ENCODE measurements at regions of chr7 and their contacts with region 1.

Region 1: GRCh38 chr7:80918909-80919662 is at the start of gene SEMA3C:
- DNase-seq: peak; percentile 92
- H3K4me3 Mint-ChIP-seq: peak within 1 kb of the TSS; percentile 86
- H3K27ac Mint-ChIP-seq: peak within 1 kb of the TSS; percentile 100
- H3K4me1 Mint-ChIP-seq: peaks cover 45% of the 10 kb centered on the region
- H3K27me3 Mint-ChIP-seq: no peaks in the 10 kb centered on the region
- CTCF ChIP-seq: no peak
- total RNA-seq, gene SEMA3C: 61.1 and 67.7 TPM in 2 replicates

Region 2: GRCh38 chr7:80941208-80941758 is 22.2 kb after region 1 on chr7:
- CTCF ChIA-PET with region 1: interaction called, 13 read pairs
- intact Hi-C with region 1: loop called (anchors 1 kb)
- DNase-seq: no peak
- H3K4me3 Mint-ChIP-seq: peak overlapping the region; percentile 25
- H3K27ac Mint-ChIP-seq: peak overlapping the region; percentile 89
- H3K4me1 Mint-ChIP-seq: peaks cover 29% of the 10 kb centered on the region
- H3K27me3 Mint-ChIP-seq: no peaks in the 10 kb centered on the region
- CTCF ChIP-seq: no peak

Region 3: DNA sequence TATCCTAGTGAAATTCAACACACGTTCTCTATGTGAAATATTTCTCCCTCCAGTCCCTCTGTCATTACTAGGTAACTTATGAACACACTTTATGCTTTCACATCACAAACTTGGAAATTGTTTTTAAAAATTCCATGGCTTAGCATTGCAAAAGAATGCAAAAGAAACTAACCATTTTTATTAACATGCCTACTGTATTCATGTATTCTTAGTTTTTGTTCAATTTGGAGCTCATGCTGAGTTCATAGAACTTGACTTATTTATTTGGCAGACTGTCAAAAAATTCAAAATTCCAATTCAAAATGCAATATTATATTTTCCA is 154.8 kb after region 1 on chr7:
- CTCF ChIA-PET with region 1: interaction called, 4 read pairs
- intact Hi-C with region 1: loop called (anchors 1 kb)
- DNase-seq: no peak
- H3K4me3 Mint-ChIP-seq: peak overlapping the region; percentile 51
- H3K27ac Mint-ChIP-seq: peak overlapping the region; percentile 99
- H3K4me1 Mint-ChIP-seq: peaks cover 22% of the 10 kb centered on the region
- H3K27me3 Mint-ChIP-seq: no peaks in the 10 kb centered on the region
- CTCF ChIP-seq: no peak

Region 4: DNA sequence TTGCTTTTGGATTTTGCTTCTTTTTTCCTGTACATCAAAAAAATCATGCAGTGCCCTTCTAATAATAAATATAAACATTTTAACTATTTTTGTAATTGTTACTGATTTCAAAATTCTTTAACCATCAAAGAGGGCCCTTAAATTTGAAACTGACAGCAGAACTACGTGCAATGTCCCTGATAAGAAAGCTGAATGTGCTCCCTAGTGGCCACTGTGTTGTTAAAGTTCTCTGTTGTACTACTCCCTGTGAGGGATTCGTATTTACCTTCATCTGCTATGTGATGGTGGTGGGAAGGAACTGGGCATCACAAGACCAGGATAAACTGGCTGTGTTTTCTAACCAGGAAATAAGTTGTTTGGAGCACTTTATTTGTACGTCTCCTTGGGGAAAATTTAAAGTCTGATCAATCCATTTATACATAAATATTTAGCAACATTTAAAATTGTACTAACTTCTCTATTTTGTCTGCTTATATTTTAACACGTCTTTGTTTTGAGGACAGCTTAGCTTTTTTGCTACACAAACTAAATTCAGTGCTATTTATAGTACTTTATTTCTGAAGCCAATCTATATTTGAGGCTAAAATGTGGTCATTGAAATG is 528.4 kb after region 1 on chr7:
- CTCF ChIA-PET with region 1: no interaction called
- intact Hi-C with region 1: loop called (anchors 1 kb)
- DNase-seq: peak; percentile 21
- H3K4me3 Mint-ChIP-seq: no peak overlapping the region
- H3K27ac Mint-ChIP-seq: no peak overlapping the region
- H3K4me1 Mint-ChIP-seq: no peaks in the 10 kb centered on the region
- H3K27me3 Mint-ChIP-seq: no peaks in the 10 kb centered on the region
- CTCF ChIP-seq: no peak